Spleen (tissue), 13 donors: ENCODE measurements at regions of chr6 and their contacts with region 1.

Region 1: GRCh38 chr6:37207903-37208456 is 38.0 kb downstream of the PIM1 start:
- DNase-seq: peak; percentile 96
- H3K4me3 ChIP-seq: no peak overlapping the region
- H3K27ac ChIP-seq: peak overlapping the region in 4 of 8 donors; percentile 27 to 62 (median 56)
- H3K4me1 ChIP-seq: peaks cover 0 to 67% (median 33%) of the 10 kb centered on the region in 6 donors
- H3K27me3 ChIP-seq: no peaks in the 10 kb centered on the region
- CTCF ChIP-seq: peak; percentile 72 to 96 (median 92)
- POLR2A ChIP-seq: no peak

Region 2: DNA sequence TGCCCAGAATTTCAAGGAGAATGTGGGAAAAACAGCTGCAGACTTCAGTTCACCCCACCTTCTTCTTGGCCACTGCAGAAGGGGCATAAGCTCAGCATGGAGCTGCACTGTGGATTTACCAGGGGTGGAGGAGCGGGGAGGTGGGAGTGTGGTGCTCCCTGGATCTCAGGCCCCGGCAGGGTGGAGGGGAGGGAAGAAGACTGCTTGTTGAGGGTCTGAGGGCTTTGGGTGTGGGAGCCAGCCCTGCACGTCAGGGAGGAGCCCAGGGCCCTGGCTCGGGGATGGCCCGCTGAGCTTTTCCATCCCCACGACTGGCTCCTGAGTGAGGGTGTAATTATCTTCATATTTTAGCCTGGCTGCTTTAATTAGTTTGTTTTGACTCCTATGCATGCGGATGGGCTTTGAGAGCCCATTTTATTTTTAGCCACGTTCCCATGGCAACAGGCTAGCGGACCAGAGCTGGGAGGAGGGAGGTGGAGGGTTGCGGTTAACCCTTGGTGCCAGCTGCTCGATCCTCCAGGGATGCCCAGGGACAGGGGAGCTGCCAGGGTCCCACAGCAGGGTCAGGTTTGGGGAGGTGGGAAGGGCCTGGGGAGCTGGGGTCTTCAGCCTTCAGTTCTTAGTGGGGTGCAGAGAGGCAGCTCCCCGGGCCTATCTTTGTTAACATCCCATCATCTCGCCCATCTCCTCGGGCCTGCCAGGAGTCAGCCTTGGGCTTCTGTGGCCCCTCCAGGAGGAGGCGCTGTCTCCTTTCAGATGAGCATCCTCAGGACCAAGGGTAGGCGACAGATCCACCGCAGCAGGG is 442.2 kb before region 1 on chr6:
- intact Hi-C with region 1: loop called (anchors 10 kb)
- DNase-seq: peak; percentile 94
- H3K4me3 ChIP-seq: no peak overlapping the region
- H3K27ac ChIP-seq: no peak overlapping the region
- H3K4me1 ChIP-seq: peaks cover 23 to 58% (median 46%) of the 10 kb centered on the region in 6 donors
- H3K27me3 ChIP-seq: no peaks in the 10 kb centered on the region
- CTCF ChIP-seq: peak; percentile 82 to 98 (median 92)
- POLR2A ChIP-seq: no peak

Region 3: DNA sequence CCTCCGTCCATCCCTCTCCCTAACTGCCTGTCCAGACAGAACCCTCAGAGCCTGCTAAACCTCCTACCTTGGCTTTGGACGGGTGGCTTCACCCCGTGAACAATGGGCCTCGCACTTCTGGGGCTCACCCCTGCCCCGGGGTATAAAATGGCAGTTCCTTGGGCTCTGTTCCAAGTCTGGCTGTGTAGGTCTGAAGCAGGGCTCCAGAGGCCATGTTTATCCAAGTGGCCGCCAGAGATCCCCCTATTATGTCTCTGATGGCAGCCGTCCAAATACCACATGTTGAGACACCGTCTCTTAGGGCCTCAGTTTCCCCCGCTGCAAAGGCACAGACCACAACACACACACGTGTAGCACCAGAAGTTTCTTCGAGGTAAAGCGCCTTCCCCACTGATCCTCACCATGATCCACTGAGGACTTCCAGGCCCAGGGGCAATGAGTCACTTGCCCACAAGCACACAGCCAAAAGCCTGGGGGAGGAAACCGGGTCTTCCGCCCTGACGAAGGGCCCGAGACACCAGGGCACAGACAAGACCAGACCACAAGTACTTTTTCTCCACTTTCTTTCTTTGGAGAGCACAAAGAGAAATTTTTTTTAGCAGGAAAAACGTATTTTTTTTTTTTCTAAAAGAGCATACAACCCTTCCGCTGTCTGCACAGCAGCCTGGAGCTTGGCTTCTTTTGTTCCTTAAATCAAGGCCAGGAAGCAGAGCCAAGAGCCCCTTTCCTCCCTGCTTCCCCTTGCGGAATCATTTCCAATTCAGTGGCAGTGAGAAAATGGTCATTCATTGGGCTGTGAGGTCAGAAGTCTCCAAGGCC is 380.5 kb before region 1 on chr6:
- intact Hi-C with region 1: no loop called
- DNase-seq: peak; percentile 80
- H3K4me3 ChIP-seq: no peak overlapping the region
- H3K27ac ChIP-seq: peak overlapping the region in 6 of 8 donors; percentile 29 to 68 (median 52)
- H3K4me1 ChIP-seq: peaks cover 0 to 69% (median 39%) of the 10 kb centered on the region in 6 donors
- H3K27me3 ChIP-seq: peaks cover 0 to 18% (median 0%) of the 10 kb centered on the region in 7 donors
- CTCF ChIP-seq: no peak
- POLR2A ChIP-seq: no peak

Region 4: GRCh38 chr6:36885461-36886401 is 322.2 kb before region 1 on chr6 and contains the start of gene C6orf89:
- intact Hi-C with region 1: loop called (anchors 10 kb)
- DNase-seq: peak; percentile 99
- H3K4me3 ChIP-seq: peak within 1 kb of the TSS; percentile 70 to 88 (median 78)
- H3K27ac ChIP-seq: peak within 1 kb of the TSS; percentile 85 to 90 (median 88)
- H3K4me1 ChIP-seq: peaks cover 9 to 51% (median 29%) of the 10 kb centered on the region in 6 donors
- H3K27me3 ChIP-seq: no peaks in the 10 kb centered on the region
- CTCF ChIP-seq: peak; percentile 88 to 98 (median 92)
- POLR2A ChIP-seq: peak; percentile 29 to 53 (median 32)
- total RNA-seq, gene C6orf89: 31.5 to 49.8 (median 37.9) TPM

Region 5: GRCh38 chr6:37018198-37019064 is 189.5 kb before region 1 on chr6:
- intact Hi-C with region 1: loop called (anchors 2 kb)
- DNase-seq: peak; percentile 96
- H3K4me3 ChIP-seq: peak overlapping the region in 1 of 8 donors; percentile 10
- H3K27ac ChIP-seq: peak overlapping the region in 7 of 8 donors; percentile 20 to 75 (median 47)
- H3K4me1 ChIP-seq: peaks cover 8 to 53% (median 29%) of the 10 kb centered on the region in 6 donors
- H3K27me3 ChIP-seq: no peaks in the 10 kb centered on the region
- CTCF ChIP-seq: peak; percentile 91 to 98 (median 94)
- POLR2A ChIP-seq: no peak

Region 6: GRCh38 chr6:37115236-37115895 is 92.6 kb before region 1 on chr6:
- intact Hi-C with region 1: no loop called
- DNase-seq: no peak
- H3K4me3 ChIP-seq: no peak overlapping the region
- H3K27ac ChIP-seq: no peak overlapping the region
- H3K4me1 ChIP-seq: no peaks in the 10 kb centered on the region
- H3K27me3 ChIP-seq: no peaks in the 10 kb centered on the region
- CTCF ChIP-seq: no peak
- POLR2A ChIP-seq: no peak

Region 7: GRCh38 chr6:37155394-37156312 is 52.3 kb before region 1 on chr6:
- intact Hi-C with region 1: no loop called
- DNase-seq: peak; percentile 84
- H3K4me3 ChIP-seq: no peak overlapping the region
- H3K27ac ChIP-seq: peak overlapping the region in 7 of 8 donors; percentile 19 to 80 (median 59)
- H3K4me1 ChIP-seq: peaks cover 0 to 45% (median 23%) of the 10 kb centered on the region in 6 donors
- H3K27me3 ChIP-seq: peaks cover 0 to 4% (median 0%) of the 10 kb centered on the region in 7 donors
- CTCF ChIP-seq: no peak
- POLR2A ChIP-seq: no peak